CD4-positive, alpha-beta memory T cell (primary cell): ENCODE measurements at regions of chr16 and their contacts with region 1.

Region 1: GRCh38 chr16:47141773-47142485 is 1.8 kb downstream of the NETO2 start:
- DNase-seq: peak; percentile 80 to 89 (median 83)
- H3K4me3 ChIP-seq: peak overlapping the region; percentile 46 to 52
- H3K4me3 Mint-ChIP-seq: peak overlapping the region; percentile 87 to 93 (median 90)
- H3K27ac ChIP-seq: no peak overlapping the region
- H3K27ac Mint-ChIP-seq: peak overlapping the region; percentile 12 to 93 (median 71)
- H3K4me1 ChIP-seq: peaks cover 27% of the 10 kb centered on the region
- H3K4me1 Mint-ChIP-seq: peaks cover 8 to 21% (median 13%) of the 10 kb centered on the region in 4 donors
- H3K27me3 ChIP-seq: no peaks in the 10 kb centered on the region
- H3K27me3 Mint-ChIP-seq: peaks cover 0 to 3% of the 10 kb centered on the region in 2 donors

Region 2: DNA sequence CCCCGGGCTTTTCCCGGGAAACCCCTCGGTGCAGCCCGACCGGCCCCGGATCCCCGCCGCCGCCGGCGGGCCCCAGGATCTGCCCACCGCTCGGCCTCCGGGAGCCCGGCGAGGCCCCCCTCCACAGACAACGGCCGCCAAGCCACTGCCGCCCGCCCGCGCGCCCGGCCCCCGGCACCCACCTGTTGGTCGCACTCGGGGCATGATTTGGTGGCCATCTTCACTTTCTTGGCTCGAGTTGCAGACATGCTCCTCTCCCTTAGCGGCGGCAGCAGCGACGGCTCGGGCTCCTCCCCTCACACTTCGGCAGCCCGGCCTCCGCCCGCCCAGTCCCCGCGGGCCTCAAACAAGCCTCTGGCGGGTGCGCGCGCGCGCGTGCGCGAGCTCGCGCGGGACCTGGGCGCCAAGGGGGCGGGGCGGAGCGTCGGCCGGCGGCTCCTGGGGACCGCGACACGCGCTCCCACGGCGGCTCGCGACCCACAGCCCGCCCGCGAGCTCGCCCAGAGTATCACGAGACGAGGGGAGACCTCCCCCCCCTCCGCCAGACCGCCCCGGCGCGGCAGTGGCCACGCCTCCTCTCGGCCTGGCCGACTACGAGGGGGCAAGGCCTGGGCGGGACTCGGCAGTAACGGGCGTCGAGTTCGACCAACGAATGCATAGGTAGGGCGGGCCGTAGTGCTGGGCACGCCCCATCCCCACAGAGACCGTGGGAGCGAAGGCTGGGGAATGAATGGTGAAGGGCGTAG is 310.9 kb before region 1 on chr16 and contains the start of gene C16orf87:
- CTCF ChIA-PET with region 1: no interaction called
- POLR2A ChIA-PET with region 1: no interaction called
- intact Hi-C with region 1: loop called (anchors 2 kb)
- DNase-seq: peak; percentile 92 to 95 (median 93)
- H3K4me3 ChIP-seq: peak within 1 kb of the TSS; percentile 74 to 84
- H3K4me3 Mint-ChIP-seq: peak within 1 kb of the TSS; percentile 92 to 100 (median 94)
- H3K27ac ChIP-seq: peak within 1 kb of the TSS; percentile 71
- H3K27ac Mint-ChIP-seq: peak within 1 kb of the TSS; percentile 89 to 99 (median 97)
- H3K4me1 ChIP-seq: peaks cover 41% of the 10 kb centered on the region
- H3K4me1 Mint-ChIP-seq: peaks cover 18 to 37% (median 25%) of the 10 kb centered on the region in 4 donors
- H3K27me3 ChIP-seq: no peaks in the 10 kb centered on the region
- H3K27me3 Mint-ChIP-seq: no peaks in the 10 kb centered on the region
- total RNA-seq, gene C16orf87: 5.8 to 6.2 TPM

Region 3: DNA sequence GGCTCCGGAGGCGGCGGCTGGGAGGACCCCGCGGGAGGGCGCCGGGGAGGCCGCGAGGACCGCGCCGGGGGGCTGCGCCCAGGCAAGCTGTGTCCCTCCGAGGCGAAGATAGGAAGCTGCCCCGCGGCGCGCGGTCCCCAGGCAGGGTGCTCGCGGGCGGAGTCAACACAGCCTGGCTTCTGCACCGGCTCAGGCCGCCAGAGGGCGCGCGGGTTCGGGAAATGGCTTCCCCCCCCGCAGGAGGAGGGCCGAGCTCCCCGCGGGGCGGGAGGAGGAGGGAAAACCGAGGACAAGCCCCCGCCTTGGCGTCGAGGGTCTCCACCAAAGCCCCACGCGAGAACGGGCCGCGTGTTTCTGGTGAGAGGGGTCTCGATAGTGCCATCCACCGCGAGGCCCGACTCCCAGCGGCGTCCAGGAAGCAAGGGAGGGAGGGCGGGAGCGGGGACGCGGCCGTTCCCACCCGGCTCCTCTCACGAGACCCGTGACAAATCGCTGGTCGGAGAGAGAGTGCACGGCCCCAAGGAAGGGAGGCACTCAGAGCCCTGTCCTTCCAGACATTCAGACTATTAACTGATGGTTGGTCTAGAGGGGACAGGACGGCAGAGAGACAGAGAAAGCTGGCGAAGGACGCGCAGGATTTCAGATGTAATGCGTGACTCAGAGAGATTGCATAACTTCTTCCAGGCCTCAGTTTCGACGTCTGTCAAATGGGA is 104.0 kb before region 1 on chr16:
- CTCF ChIA-PET with region 1: interaction called, 25 read pairs
- POLR2A ChIA-PET with region 1: interaction called, 7 read pairs
- intact Hi-C with region 1: loop called (anchors 1 kb)
- DNase-seq: peak; percentile 81 to 89 (median 85)
- H3K4me3 ChIP-seq: peak overlapping the region; percentile 61 to 67
- H3K4me3 Mint-ChIP-seq: peak overlapping the region; percentile 68 to 85 (median 80)
- H3K27ac ChIP-seq: peak overlapping the region; percentile 45
- H3K27ac Mint-ChIP-seq: peak overlapping the region in 4 of 7 donors; percentile 8 to 71 (median 42)
- H3K4me1 ChIP-seq: no peaks in the 10 kb centered on the region
- H3K4me1 Mint-ChIP-seq: peaks cover 0 to 8% (median 5%) of the 10 kb centered on the region in 4 donors
- H3K27me3 ChIP-seq: no peaks in the 10 kb centered on the region
- H3K27me3 Mint-ChIP-seq: no peaks in the 10 kb centered on the region

Region 4: DNA sequence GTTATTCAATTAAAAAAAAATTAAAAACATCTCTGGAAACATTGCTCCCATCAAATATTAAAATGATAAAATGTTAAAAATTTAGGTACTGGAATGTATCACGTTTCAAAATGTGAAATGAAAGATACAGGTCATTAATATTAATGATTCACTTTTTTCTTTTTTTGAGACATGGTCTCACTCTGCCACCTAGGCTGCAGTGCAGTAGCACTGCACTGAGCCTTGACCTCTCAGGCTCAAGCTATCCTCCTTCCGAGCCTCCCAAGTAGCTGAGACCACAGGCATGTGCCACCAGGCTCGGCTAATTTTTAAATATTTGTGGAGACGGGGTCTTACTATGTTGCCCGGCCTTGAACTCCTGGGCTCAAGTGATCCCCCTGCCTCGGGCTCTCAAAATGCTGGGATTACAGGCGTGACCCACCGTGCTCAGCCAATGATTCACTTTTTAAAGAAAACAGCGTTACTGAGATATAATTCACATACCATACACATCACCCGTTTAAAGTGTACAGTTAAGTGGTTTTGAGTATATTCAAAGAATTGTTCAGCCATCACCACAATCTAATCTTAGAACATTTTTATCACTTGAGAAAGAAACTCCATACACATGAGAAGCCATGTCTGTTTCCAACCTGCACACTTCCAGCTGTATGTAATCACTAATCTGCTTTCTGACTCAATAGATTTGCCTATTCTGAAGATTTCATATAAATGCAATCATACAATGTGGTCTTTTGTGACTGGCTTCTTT is 20.9 kb after region 1 on chr16:
- CTCF ChIA-PET with region 1: interaction called, 39 read pairs
- POLR2A ChIA-PET with region 1: no interaction called
- intact Hi-C with region 1: no loop called
- DNase-seq: no peak
- H3K4me3 ChIP-seq: no peak overlapping the region
- H3K4me3 Mint-ChIP-seq: no peak overlapping the region
- H3K27ac ChIP-seq: no peak overlapping the region
- H3K27ac Mint-ChIP-seq: no peak overlapping the region
- H3K4me1 ChIP-seq: no peaks in the 10 kb centered on the region
- H3K4me1 Mint-ChIP-seq: no peaks in the 10 kb centered on the region
- H3K27me3 ChIP-seq: no peaks in the 10 kb centered on the region
- H3K27me3 Mint-ChIP-seq: no peaks in the 10 kb centered on the region

Region 5: DNA sequence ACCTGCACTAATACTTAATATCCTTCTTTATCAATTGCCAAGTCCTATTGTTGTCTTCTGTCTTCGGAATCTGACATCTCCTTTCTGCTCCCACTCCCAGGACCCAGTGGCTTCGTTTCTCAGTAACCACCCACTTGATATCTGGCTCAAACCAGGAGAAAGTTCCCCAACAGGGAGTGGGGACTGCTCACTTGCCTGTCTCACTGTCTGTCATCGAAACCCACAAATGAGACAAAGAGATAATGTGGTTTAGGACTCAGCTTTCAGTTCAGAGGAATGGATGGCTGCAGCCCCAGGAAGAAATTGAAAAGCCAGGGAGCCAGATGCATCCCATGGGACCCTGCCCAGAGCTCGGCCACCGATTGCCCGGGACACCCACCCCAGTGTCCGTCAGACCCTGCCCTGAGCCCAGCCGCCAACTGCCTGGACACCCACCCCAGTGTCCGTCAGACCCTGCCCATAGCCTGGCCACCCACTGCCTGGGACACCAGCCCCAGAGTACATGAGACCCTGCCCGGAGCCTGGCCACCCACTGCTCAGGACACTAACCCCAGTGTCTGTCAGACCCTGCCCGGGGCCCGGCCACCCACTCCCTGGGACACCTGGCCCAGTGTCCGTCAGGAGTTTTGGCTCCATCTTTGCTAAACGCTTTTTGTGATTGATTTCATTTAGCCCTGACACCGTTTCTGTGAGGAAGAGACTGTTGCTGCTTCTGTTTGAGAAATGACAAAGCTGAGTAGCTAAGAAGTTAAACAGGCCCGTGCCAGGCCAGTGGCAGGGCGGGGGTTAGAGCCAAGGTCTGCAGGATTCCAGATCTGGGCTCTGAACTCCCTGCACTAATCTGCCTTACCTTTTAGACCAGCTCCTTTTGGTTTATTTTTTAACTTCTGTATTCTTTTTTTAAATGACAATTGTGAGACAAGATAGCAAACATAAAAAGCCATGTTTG is 570.6 kb after region 1 on chr16:
- CTCF ChIA-PET with region 1: no interaction called
- POLR2A ChIA-PET with region 1: no interaction called
- intact Hi-C with region 1: no loop called
- DNase-seq: no peak
- H3K4me3 ChIP-seq: no peak overlapping the region
- H3K4me3 Mint-ChIP-seq: no peak overlapping the region
- H3K27ac ChIP-seq: no peak overlapping the region
- H3K27ac Mint-ChIP-seq: no peak overlapping the region
- H3K4me1 ChIP-seq: no peaks in the 10 kb centered on the region
- H3K4me1 Mint-ChIP-seq: peaks cover 0 to 6% (median 2%) of the 10 kb centered on the region in 4 donors
- H3K27me3 ChIP-seq: no peaks in the 10 kb centered on the region
- H3K27me3 Mint-ChIP-seq: peaks cover 0 to 3% of the 10 kb centered on the region in 2 donors

Region 6: DNA sequence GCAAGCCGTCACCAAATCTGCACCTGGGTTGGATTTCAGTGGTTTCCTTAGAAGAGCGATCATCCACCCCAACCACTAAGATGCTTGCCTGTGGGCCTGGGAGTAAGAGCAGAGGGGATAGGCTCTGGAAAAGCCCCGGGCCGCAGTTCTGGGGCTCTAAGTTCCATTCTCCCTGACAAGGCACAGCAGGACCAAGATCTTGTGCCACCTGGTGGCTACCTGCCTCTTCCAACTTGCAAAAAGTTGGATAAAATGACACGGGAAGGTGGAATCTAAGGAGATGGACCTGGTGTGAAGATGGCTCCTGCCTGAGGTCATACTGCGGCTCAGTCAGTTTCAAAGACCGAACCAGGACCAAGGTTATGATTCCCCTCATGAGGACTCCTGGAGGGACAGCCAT is 971.5 kb after region 1 on chr16:
- CTCF ChIA-PET with region 1: interaction called, 9 read pairs
- POLR2A ChIA-PET with region 1: no interaction called
- intact Hi-C with region 1: loop called (anchors 1 kb)
- DNase-seq: no peak
- H3K4me3 ChIP-seq: no peak overlapping the region
- H3K4me3 Mint-ChIP-seq: no peak overlapping the region
- H3K27ac ChIP-seq: no peak overlapping the region
- H3K27ac Mint-ChIP-seq: no peak overlapping the region
- H3K4me1 ChIP-seq: no peaks in the 10 kb centered on the region
- H3K4me1 Mint-ChIP-seq: peaks cover 0 to 1% (median 0%) of the 10 kb centered on the region in 4 donors
- H3K27me3 ChIP-seq: no peaks in the 10 kb centered on the region
- H3K27me3 Mint-ChIP-seq: peaks cover 4 to 12% of the 10 kb centered on the region in 2 donors

Region 7: GRCh38 chr16:48164907-48165726 is 1023.2 kb after region 1 on chr16:
- CTCF ChIA-PET with region 1: interaction called, 18 read pairs
- POLR2A ChIA-PET with region 1: no interaction called
- intact Hi-C with region 1: loop called (anchors 2 kb)
- DNase-seq: peak; percentile 40 to 59 (median 49)
- H3K4me3 ChIP-seq: no peak overlapping the region
- H3K4me3 Mint-ChIP-seq: peak overlapping the region in 1 of 8 donors; percentile 39
- H3K27ac ChIP-seq: no peak overlapping the region
- H3K27ac Mint-ChIP-seq: no peak overlapping the region
- H3K4me1 ChIP-seq: peaks cover 4% of the 10 kb centered on the region
- H3K4me1 Mint-ChIP-seq: peaks cover 0 to 4% (median 3%) of the 10 kb centered on the region in 4 donors
- H3K27me3 ChIP-seq: no peaks in the 10 kb centered on the region
- H3K27me3 Mint-ChIP-seq: peaks cover under 1 to 2% of the 10 kb centered on the region in 2 donors

Region 8: DNA sequence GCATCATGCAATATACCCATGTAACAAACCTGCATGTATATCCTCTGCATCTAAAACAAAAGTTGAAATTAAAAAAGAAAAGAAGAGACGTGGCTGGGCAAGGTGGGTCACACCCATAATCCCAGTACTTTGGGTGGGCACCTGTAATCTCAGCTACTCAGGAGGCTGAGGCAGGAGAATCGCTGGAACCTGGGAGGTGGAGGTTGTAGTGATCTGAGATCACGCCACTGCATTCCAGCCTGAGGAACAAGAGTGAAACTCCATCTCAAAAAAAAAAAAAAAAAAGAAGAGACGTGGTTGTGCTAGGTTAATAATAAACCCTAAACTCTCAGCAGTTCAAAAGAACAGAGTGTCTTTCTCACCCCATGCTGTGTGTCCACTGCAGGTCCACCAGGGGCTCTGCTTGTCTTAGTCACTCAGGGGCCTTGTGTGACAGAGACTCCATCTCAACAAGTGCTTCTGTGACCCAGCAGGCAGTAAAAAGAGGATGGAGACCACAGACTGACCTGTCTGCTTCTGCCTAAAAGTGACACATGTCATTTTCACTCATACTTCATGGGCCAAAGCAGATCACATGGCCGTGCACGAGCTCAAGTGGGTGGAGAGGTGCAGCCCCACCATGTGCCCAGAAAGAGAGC is 1490.3 kb after region 1 on chr16:
- CTCF ChIA-PET with region 1: interaction called, 4 read pairs
- POLR2A ChIA-PET with region 1: no interaction called
- intact Hi-C with region 1: loop called (anchors 5 kb)
- DNase-seq: no peak
- H3K4me3 ChIP-seq: no peak overlapping the region
- H3K4me3 Mint-ChIP-seq: no peak overlapping the region
- H3K27ac ChIP-seq: no peak overlapping the region
- H3K27ac Mint-ChIP-seq: peak overlapping the region in 1 of 7 donors; percentile 75
- H3K4me1 ChIP-seq: peaks cover 4% of the 10 kb centered on the region
- H3K4me1 Mint-ChIP-seq: peaks cover 4 to 11% (median 5%) of the 10 kb centered on the region in 4 donors
- H3K27me3 ChIP-seq: no peaks in the 10 kb centered on the region
- H3K27me3 Mint-ChIP-seq: peaks cover 3 to 7% of the 10 kb centered on the region in 2 donors